Dendritic cell treated with granulocyte-macrophage colony-stimulating factor and Interleukin-4, amounts not matched to agents 40 ng/mL and 50 ng/mL, for 4 days (primary cell): ENCODE measurements at regions of chr16 and their contacts with region 1.

Region 1: DNA sequence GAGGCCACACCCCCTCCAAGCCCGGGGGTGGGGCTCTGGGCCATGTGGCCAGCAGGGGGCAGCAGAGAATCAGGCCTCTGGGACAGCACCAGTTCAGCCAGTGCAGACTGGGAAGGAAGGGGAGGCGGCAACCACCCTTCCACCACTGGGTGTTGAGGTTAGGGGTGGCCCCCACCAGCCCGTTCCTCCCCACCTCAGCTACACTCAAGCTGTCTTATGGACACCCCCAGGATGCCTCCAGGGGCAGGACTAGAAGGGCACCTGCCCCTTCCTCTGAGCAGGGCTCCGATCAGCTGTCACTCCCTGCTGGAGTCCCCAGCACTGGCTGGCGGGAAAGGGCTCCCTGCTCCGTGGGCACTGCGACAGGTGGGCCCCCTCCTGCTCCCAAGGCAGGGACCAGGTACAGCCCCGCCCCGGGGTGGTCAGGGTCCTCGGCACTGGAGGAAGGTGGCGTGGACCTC is 21.8 kb downstream of the KATNB1 start:
- H3K4me3 Mint-ChIP-seq: no peak overlapping the region
- H3K27ac Mint-ChIP-seq: no peak overlapping the region
- H3K4me1 Mint-ChIP-seq: peaks cover 17% of the 10 kb centered on the region
- H3K27me3 Mint-ChIP-seq: no peaks in the 10 kb centered on the region

Region 2: DNA sequence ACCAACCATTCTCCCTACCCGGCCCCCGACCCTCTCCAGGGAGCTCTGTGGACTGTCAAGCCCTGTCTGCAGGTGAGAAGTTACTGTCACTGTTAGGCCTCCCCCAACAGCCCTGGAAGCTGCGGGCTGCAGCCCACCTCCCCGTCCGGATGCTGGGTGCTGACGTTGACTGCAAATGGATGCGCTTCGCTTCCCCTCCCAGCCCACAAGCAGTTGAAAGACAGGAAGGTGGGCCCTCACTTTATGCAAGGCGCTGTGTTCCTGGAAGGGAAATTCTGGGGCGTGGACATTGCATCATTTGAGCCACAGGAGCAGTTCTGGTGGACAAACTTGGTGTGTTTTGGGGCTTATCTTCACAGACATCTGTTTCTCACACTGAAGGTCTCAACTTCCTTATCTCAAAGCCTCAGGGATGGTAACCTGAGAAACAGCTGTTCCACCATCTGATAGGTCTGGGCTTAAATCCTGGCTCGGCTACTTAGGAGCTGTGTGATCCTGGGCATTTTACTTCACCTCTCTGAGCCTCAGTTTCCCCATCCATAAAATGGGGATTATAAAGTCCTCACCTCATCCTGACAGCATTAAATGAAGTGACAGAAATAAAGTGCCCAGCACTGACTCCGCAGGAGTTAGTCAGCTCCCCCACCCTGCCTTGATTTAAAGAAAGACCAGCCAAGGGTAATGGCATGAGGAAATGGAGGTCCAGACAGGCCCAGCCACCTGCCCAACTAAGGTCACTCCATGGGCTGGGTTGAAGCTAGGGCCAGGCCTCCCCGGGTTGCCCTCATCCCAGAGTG is 67.4 kb before region 1 on chr16:
- intact Hi-C with region 1: no loop called
- H3K4me3 Mint-ChIP-seq: no peak overlapping the region
- H3K27ac Mint-ChIP-seq: no peak overlapping the region
- H3K4me1 Mint-ChIP-seq: peaks cover 46% of the 10 kb centered on the region
- H3K27me3 Mint-ChIP-seq: peaks cover 14% of the 10 kb centered on the region

Region 3: GRCh38 chr16:57863434-57864160 is 106.2 kb after region 1 on chr16:
- intact Hi-C with region 1: loop called (anchors 1 kb)
- H3K4me3 Mint-ChIP-seq: no peak overlapping the region
- H3K27ac Mint-ChIP-seq: peak overlapping the region; percentile 38
- H3K4me1 Mint-ChIP-seq: peaks cover 9% of the 10 kb centered on the region
- H3K27me3 Mint-ChIP-seq: peaks cover 7% of the 10 kb centered on the region

Region 4: DNA sequence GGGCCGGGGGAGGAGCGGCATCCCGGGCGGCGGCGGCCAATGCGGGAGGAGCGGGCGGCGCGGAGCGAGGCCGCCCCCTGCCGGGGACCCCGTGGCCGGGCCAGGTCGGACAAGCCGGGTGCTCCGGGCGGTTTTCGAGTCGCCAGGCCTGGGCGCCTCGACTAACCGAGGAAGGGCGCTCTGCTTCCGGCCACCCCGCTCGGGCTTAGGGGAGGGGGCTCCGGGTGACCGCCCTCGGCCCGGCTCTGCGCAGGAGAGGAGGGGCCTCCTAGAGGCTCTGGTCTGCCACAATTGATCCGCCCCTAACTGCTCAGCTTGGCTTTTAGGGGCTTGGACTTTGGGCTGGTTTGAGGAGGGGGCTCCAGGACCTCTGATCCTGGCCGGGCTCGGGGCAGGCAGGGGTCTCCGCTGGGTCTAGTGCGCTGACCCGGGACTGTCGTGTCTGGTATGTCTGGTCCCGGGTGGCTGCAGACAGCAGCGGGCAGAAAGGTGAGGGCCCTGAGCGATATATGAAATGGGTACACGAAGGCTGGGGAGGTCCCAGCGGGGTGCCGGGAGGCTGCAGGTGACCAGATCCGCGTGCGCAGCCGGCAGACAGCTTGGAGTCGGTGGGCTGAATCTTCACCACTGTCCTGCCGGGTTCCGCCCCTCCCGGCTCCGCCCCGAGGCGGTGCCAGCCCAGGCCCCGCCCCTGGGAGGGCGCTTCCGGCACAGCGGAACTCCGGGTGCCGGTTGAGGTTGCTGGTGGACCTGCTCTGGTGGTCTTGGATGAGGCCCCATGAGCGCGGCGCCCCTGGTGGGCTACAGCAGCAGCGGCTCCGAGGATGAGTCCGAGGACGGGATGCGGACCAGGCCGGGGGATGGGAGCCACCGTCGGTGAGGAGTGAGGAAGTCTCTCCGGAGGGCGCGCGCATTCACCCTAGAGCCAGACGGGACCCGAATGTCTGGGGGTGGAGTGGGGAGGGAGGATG is 243.6 kb after region 1 on chr16 and contains the start of gene USB1:
- intact Hi-C with region 1: loop called (anchors 1 kb)
- H3K4me3 Mint-ChIP-seq: peak within 1 kb of the TSS; percentile 97
- H3K27ac Mint-ChIP-seq: peak within 1 kb of the TSS; percentile 94
- H3K4me1 Mint-ChIP-seq: peaks cover 68% of the 10 kb centered on the region
- H3K27me3 Mint-ChIP-seq: no peaks in the 10 kb centered on the region